Right ventricle myocardium inferior (tissue), 1 donor: ENCODE measurements at regions of chr11 and their contacts with region 1.

Region 1: DNA sequence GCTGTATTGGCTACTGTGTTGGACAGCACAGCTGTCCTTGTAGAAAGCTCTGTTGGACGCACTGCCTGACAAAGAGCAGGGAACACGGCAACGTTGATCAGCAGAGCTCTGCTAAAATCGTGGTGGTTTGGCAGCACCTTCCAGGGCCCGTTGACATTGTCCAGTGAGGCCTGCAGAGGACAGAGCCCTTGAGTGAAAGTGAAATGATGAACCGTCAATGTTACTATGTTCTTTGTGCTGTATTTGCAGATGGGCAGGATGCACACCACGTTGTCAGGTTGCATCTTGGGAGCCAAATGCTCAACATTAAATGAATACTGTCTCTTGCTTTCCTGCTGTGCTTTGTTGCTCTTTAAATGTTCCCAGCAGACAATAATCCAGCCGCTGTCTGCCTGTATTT is 69.7 kb downstream of the NELL1 start:
- DNase-seq: no peak
- ATAC-seq: no peak

Region 2: GRCh38 chr11:20808328-20808727 is 69.2 kb after region 1 on chr11:
- intact Hi-C with region 1: no loop called
- DNase-seq: no peak
- ATAC-seq: no peak

Region 3: GRCh38 chr11:20991471-20991870 is 252.4 kb after region 1 on chr11:
- intact Hi-C with region 1: loop called (anchors 5 kb)
- DNase-seq: no peak
- ATAC-seq: no peak